ENCODE measurements at regions of chr18 and their contacts with region 1.

Region 1: GRCh38 chr18:57004366-57005121 is 142.3 kb upstream of the BOD1L2 start:
- DNase-seq: peak; percentile 56
- ATAC-seq: peak; percentile 93
- H3K4me3 ChIP-seq: no peak overlapping the region
- H3K27ac ChIP-seq: no peak overlapping the region
- H3K4me1 ChIP-seq: peaks cover 8% of the 10 kb centered on the region
- H3K27me3 ChIP-seq: no peaks in the 10 kb centered on the region
- CTCF ChIP-seq: no peak

Region 2: GRCh38 chr18:56770873-56771272 is 233.7 kb before region 1 on chr18:
- CTCF ChIA-PET with region 1: no interaction called
- POLR2A ChIA-PET with region 1: no interaction called
- intact Hi-C with region 1: loop called (anchors 10 kb)
- DNase-seq: no peak
- ATAC-seq: no peak
- H3K4me3 ChIP-seq: no peak overlapping the region
- H3K27ac ChIP-seq: no peak overlapping the region
- H3K4me1 ChIP-seq: no peaks in the 10 kb centered on the region
- H3K27me3 ChIP-seq: no peaks in the 10 kb centered on the region
- CTCF ChIP-seq: no peak

Measured in PC-3 (cell line).